HepG2 (cell line): ENCODE measurements at regions of chr16 and their contacts with region 1.

Region 1: GRCh38 chr16:10181196-10182162 is 749 bp downstream of the GRIN2A start:
- DNase-seq: peak; percentile 38
- ATAC-seq: peak; percentile 93
- H3K4me3 ChIP-seq: peak overlapping the region in 1 of 3 experiments; percentile 23; a peak in 1 of 6 replicates
- H3K27ac ChIP-seq: no peak overlapping the region
- H3K4me1 ChIP-seq: peaks cover 8% of the 10 kb centered on the region
- H3K27me3 ChIP-seq: peaks cover 18 to 38% of the 10 kb centered on the region in 2 experiments
- CTCF ChIP-seq: peak; percentile 99
- EP300 ChIP-seq: no peak
- POLR2A ChIP-seq: no peak
- RAD21 ChIP-seq: peak; percentile 99

Region 2: GRCh38 chr16:9159839-9160550 is 1021.5 kb before region 1 on chr16:
- CTCF ChIA-PET with region 1: interaction called, 23 read pairs
- POLR2A ChIA-PET with region 1: no interaction called
- in situ Hi-C with region 1: loop called (anchors 5 kb)
- intact Hi-C with region 1: no loop called
- DNase-seq: peak; percentile 67
- ATAC-seq: peak; percentile 94
- H3K4me3 ChIP-seq: no peak overlapping the region
- H3K27ac ChIP-seq: no peak overlapping the region
- H3K4me1 ChIP-seq: peaks cover 14% of the 10 kb centered on the region
- H3K27me3 ChIP-seq: peaks cover 2 to 23% of the 10 kb centered on the region in 2 experiments; a peak in 4 of 5 replicates
- CTCF ChIP-seq: peak; percentile 96
- EP300 ChIP-seq: no peak
- POLR2A ChIP-seq: no peak
- RAD21 ChIP-seq: peak; percentile 88

Region 3: GRCh38 chr16:9258423-9259051 is 922.9 kb before region 1 on chr16:
- CTCF ChIA-PET with region 1: interaction called, 36 read pairs
- POLR2A ChIA-PET with region 1: no interaction called
- in situ Hi-C with region 1: loop called (anchors 5 kb)
- intact Hi-C with region 1: loop called (anchors 1 kb)
- DNase-seq: peak; percentile 44
- ATAC-seq: peak; percentile 78
- H3K4me3 ChIP-seq: no peak overlapping the region
- H3K27ac ChIP-seq: no peak overlapping the region
- H3K4me1 ChIP-seq: peaks cover 14% of the 10 kb centered on the region
- H3K27me3 ChIP-seq: no peaks in the 10 kb centered on the region
- CTCF ChIP-seq: peak; percentile 94
- EP300 ChIP-seq: no peak
- POLR2A ChIP-seq: no peak
- RAD21 ChIP-seq: peak; percentile 85

Region 4: GRCh38 chr16:9297437-9298113 is 883.9 kb before region 1 on chr16:
- CTCF ChIA-PET with region 1: interaction called, 30 read pairs
- POLR2A ChIA-PET with region 1: no interaction called
- in situ Hi-C with region 1: no loop called
- intact Hi-C with region 1: no loop called
- DNase-seq: peak; percentile 63
- ATAC-seq: peak; percentile 79
- H3K4me3 ChIP-seq: no peak overlapping the region
- H3K27ac ChIP-seq: no peak overlapping the region
- H3K4me1 ChIP-seq: no peaks in the 10 kb centered on the region
- H3K27me3 ChIP-seq: 0 out of 5 replicates have a peak, but pooled peaks cover 0 to 1% of the 10 kb centered on the region in 2 experiments
- CTCF ChIP-seq: peak; percentile 97
- EP300 ChIP-seq: no peak
- POLR2A ChIP-seq: no peak
- RAD21 ChIP-seq: peak; percentile 93

Region 5: DNA sequence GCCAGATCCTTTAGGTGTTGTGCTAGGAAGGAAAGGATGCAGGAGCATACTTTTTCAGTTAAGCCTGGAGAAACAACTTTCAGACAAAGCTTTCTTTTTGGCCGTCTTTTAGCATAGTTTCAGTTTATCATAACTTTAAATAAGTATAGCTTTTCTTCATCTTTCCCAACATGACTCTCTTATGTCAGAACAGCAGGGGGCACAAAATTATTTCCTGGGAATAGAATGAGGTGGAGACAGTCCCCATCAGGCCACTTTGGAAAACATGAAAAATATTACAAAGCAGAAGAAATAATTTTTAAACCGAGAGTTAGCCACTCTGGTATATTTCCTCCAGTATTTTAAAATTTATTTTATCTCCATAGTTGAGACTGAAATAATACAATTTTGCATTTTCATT is 702.5 kb before region 1 on chr16:
- CTCF ChIA-PET with region 1: no interaction called
- POLR2A ChIA-PET with region 1: no interaction called
- in situ Hi-C with region 1: no loop called
- intact Hi-C with region 1: loop called (anchors 2 kb)
- DNase-seq: no peak
- ATAC-seq: no peak
- H3K4me3 ChIP-seq: no peak overlapping the region
- H3K27ac ChIP-seq: no peak overlapping the region
- H3K4me1 ChIP-seq: no peaks in the 10 kb centered on the region
- H3K27me3 ChIP-seq: peaks cover 0 to 4% of the 10 kb centered on the region in 2 experiments; a peak in 1 of 5 replicates
- CTCF ChIP-seq: no peak
- EP300 ChIP-seq: no peak
- POLR2A ChIP-seq: no peak
- RAD21 ChIP-seq: no peak

Region 6: DNA sequence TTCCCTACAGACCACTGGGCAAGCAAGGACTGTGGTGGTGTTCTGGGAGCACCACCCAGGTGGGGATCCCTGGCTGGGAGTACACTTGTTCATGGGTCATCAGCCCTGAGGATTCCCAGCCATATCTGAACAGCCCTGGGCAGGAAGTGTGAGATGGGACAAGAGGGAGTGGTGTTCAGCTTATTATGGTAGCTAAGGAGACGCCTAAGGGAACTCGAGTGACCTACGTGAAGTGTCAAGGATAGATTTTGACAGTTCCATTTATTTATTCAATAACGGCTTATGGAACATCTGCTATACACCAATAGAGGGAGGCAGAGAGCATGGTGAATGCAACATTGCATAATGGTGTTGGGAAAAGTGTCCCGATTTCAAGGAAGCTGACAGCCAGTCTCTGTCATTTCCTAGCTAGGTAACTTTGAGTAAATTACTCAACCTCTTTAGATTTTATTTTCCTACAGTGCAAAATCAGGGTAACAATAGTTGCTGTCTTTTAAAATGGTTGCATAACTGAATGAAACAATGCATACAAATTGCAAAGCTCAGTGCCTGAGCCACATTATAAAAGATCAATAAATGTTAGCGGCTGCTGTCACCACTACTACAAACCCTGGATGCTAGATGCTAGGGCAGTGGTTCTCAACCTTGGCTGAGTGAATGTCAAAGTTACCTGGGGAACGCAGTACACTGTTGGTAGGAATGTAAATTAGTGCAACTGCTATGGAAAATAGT is 533.3 kb before region 1 on chr16:
- CTCF ChIA-PET with region 1: interaction called, 15 read pairs
- POLR2A ChIA-PET with region 1: no interaction called
- in situ Hi-C with region 1: loop called (anchors 5 kb)
- intact Hi-C with region 1: no loop called
- DNase-seq: peak; percentile 57
- ATAC-seq: peak; percentile 74
- H3K4me3 ChIP-seq: no peak overlapping the region
- H3K27ac ChIP-seq: no peak overlapping the region
- H3K4me1 ChIP-seq: no peaks in the 10 kb centered on the region
- H3K27me3 ChIP-seq: peaks cover 0 to 3% of the 10 kb centered on the region in 2 experiments; a peak in 2 of 5 replicates
- CTCF ChIP-seq: peak; percentile 72
- EP300 ChIP-seq: no peak
- POLR2A ChIP-seq: no peak
- RAD21 ChIP-seq: peak; percentile 59

Region 7: DNA sequence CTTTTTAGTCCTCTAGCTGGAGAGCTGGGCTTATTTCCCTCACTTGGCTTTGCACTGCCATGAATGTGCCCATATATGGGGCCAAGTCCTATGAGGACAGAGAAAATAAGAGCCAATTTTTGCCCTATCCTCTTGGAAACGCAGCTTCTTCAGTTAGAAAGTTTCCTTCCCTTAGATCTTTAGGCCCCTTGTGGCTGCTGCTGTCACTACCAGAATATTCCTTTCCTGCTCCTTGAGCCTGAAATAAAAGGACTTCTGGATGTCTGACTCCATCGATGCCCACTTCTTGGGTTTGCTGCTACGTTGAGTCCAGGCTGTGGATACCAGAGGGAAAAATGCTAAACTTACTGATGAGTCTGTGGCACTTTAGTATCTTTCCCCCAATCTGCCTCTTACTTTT is 486.3 kb before region 1 on chr16:
- CTCF ChIA-PET with region 1: no interaction called
- POLR2A ChIA-PET with region 1: no interaction called
- in situ Hi-C with region 1: no loop called
- intact Hi-C with region 1: no loop called
- DNase-seq: no peak
- ATAC-seq: no peak
- H3K4me3 ChIP-seq: no peak overlapping the region
- H3K27ac ChIP-seq: no peak overlapping the region
- H3K4me1 ChIP-seq: no peaks in the 10 kb centered on the region
- H3K27me3 ChIP-seq: no peaks in the 10 kb centered on the region
- CTCF ChIP-seq: no peak
- EP300 ChIP-seq: no peak
- POLR2A ChIP-seq: no peak
- RAD21 ChIP-seq: no peak

Region 8: GRCh38 chr16:10136916-10137315 is 44.6 kb before region 1 on chr16:
- CTCF ChIA-PET with region 1: no interaction called
- POLR2A ChIA-PET with region 1: no interaction called
- in situ Hi-C with region 1: no loop called
- intact Hi-C with region 1: no loop called
- DNase-seq: no peak
- ATAC-seq: 0 out of 3 replicates have a peak, but pooled peaks have one; percentile 42
- H3K4me3 ChIP-seq: no peak overlapping the region
- H3K27ac ChIP-seq: no peak overlapping the region
- H3K4me1 ChIP-seq: no peaks in the 10 kb centered on the region
- H3K27me3 ChIP-seq: no peaks in the 10 kb centered on the region; a peak in 1 of 5 replicates
- CTCF ChIP-seq: peak; percentile 27
- EP300 ChIP-seq: no peak
- POLR2A ChIP-seq: no peak
- RAD21 ChIP-seq: no peak